Transverse colon (tissue), 4 donors: ENCODE measurements at regions of chr6 and their contacts with region 1.

Region 1: GRCh38 chr6:3742426-3743344 is 8.8 kb downstream of the PXDC1 start:
- DNase-seq: peak; percentile 91
- H3K4me3 ChIP-seq: peak overlapping the region in 1 of 4 donors; percentile 20
- H3K27ac ChIP-seq: peak overlapping the region; percentile 62 to 84 (median 74)
- H3K4me1 ChIP-seq: peaks cover 16 to 49% (median 37%) of the 10 kb centered on the region in 4 donors
- H3K27me3 ChIP-seq: no peaks in the 10 kb centered on the region
- CTCF ChIP-seq: peak; percentile 94 to 96 (median 95)
- EP300 ChIP-seq: no peak
- POLR2A ChIP-seq: no peak

Region 2: GRCh38 chr6:3118353-3119039 is 624.2 kb before region 1 on chr6 and contains the start of gene BPHL:
- in situ Hi-C with region 1: loop called in 3 of 4 experiments (anchors 10 to 25 kb)
- intact Hi-C with region 1: no loop called
- DNase-seq: peak; percentile 99
- H3K4me3 ChIP-seq: peak within 1 kb of the TSS; percentile 71 to 83 (median 74)
- H3K27ac ChIP-seq: peak within 1 kb of the TSS; percentile 91 to 96 (median 92)
- H3K4me1 ChIP-seq: peaks cover 6 to 18% (median 10%) of the 10 kb centered on the region in 4 donors
- H3K27me3 ChIP-seq: no peaks in the 10 kb centered on the region
- CTCF ChIP-seq: no peak
- EP300 ChIP-seq: no peak
- POLR2A ChIP-seq: peak; percentile 83
- total RNA-seq, gene BPHL: 16.1 to 32.5 (median 21.2) TPM

Region 3: DNA sequence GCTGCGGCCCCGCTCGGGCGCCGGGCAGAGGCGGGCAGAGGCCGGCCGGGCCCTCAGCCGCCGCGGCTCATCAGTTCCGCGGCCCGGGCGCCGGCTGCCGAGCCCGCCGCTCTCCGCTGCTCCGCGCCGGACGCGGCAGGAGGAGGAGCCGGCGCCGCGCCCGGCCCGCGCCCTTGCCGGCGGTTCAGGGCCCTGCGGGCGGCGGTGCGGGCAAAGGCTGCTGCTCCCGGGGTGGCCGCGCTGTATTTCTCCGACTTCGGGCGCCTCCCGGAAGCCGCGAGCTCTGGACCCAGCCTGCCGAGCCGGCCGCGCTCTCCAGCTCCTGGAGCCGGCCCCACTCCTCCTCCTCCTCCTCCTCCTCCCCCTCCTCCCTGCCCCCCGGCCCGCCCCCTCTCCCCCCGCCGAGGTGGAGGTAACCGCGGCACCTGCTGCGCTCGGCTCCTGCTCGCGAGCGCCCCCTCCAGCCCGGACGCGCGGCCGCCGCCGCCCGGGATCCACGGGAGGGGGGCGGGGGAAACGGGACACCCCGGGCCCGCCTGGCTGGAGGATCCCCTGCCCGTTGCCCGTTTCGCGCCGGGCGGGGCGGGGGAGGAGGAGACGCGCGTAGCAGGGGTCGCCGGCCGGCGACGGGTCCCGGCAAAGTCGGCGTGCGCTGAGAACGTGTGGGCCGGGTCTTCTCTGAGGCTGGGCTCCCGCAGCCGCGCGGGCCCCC is 285.8 kb before region 1 on chr6 and contains the start of gene SLC22A23:
- in situ Hi-C with region 1: loop called in 1 of 4 experiments (anchors 25 kb)
- intact Hi-C with region 1: no loop called
- DNase-seq: peak; percentile 85
- H3K4me3 ChIP-seq: peak within 1 kb of the TSS; percentile 51 to 83 (median 73)
- H3K27ac ChIP-seq: peak within 1 kb of the TSS; percentile 81 to 88 (median 88)
- H3K4me1 ChIP-seq: peaks cover 0 to 28% (median 15%) of the 10 kb centered on the region in 4 donors
- H3K27me3 ChIP-seq: peaks cover 5% of the 10 kb centered on the region
- CTCF ChIP-seq: peak; percentile 20 to 90 (median 71)
- EP300 ChIP-seq: no peak
- POLR2A ChIP-seq: peak; percentile 11
- total RNA-seq, gene SLC22A23: 96.1 to 161 (median 117) TPM

Region 4: GRCh38 chr6:3707024-3707423 is 35.7 kb before region 1 on chr6:
- in situ Hi-C with region 1: no loop called
- intact Hi-C with region 1: no loop called
- DNase-seq: no peak
- H3K4me3 ChIP-seq: no peak overlapping the region
- H3K27ac ChIP-seq: no peak overlapping the region
- H3K4me1 ChIP-seq: no peaks in the 10 kb centered on the region
- H3K27me3 ChIP-seq: no peaks in the 10 kb centered on the region
- CTCF ChIP-seq: no peak
- EP300 ChIP-seq: no peak
- POLR2A ChIP-seq: no peak

Region 5: GRCh38 chr6:3797231-3798054 is 54.8 kb after region 1 on chr6:
- in situ Hi-C with region 1: no loop called
- intact Hi-C with region 1: no loop called
- DNase-seq: no peak
- H3K4me3 ChIP-seq: no peak overlapping the region
- H3K27ac ChIP-seq: no peak overlapping the region
- H3K4me1 ChIP-seq: no peaks in the 10 kb centered on the region
- H3K27me3 ChIP-seq: no peaks in the 10 kb centered on the region
- CTCF ChIP-seq: no peak
- EP300 ChIP-seq: no peak
- POLR2A ChIP-seq: no peak

Region 6: DNA sequence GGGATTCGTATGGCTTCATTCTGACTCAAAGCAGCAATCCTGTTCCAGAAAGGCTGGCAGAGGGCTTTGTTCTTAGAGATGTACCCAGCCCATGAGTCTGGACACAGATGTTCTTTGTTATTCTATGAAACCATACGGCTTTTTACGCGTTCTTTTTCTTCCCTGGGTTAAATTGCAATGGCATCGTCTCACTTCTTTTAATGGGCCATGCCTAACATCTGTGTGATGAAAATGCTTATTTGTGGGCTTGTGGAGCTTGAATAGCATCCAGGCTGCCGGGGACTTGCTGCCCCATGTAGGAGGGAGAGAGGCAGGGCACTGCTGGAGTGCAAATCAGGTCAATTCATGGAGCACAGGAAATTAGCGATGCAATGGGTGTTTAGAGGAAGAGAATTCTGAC is 125.9 kb after region 1 on chr6:
- in situ Hi-C with region 1: no loop called
- intact Hi-C with region 1: no loop called
- DNase-seq: no peak
- H3K4me3 ChIP-seq: no peak overlapping the region
- H3K27ac ChIP-seq: no peak overlapping the region
- H3K4me1 ChIP-seq: peaks cover 0 to 14% (median 8%) of the 10 kb centered on the region in 4 donors
- H3K27me3 ChIP-seq: no peaks in the 10 kb centered on the region
- CTCF ChIP-seq: no peak
- EP300 ChIP-seq: no peak
- POLR2A ChIP-seq: no peak

Region 7: DNA sequence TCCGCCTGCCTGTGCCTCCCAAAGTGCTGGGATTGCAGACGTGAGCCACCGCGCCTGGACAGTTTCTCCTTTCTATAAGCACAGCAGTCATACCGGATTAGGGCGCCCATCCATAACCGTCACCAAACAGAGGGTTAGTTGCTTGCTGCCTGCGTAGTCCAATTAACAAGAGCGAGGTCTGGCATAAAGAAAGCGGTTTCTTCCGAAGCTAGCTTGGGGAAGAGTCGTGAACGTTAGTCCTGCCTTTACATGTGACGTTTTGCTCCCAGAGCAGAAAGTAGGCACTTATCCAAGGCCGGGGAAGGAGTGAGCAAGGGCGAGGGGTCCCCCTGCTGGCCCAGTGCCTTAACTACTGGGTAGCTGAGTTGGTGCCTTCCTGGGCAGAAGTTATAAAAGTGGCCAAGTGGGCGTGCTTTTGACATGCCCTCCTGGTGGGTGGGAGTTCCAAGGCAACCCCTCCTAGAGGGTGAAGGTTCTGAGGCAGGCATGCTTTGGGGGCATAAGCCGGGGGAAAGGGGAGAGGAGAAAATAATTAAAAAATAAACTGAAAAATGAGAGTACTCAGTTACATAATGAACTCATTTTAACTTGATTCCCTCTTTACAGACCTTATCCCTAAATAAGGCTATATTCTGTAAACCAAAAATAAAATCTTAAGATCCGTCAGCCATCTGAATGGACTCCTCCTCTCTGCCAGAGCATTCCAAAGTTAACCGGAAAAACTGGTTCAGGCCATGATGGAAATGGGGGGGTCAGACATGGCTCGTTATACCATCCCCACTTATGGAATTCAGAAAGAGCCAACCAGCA is 248.2 kb after region 1 on chr6:
- in situ Hi-C with region 1: loop called (anchors 5 to 10 kb)
- intact Hi-C with region 1: no loop called
- DNase-seq: peak; percentile 87
- H3K4me3 ChIP-seq: peak overlapping the region in 3 of 4 donors; percentile 20 to 46 (median 25)
- H3K27ac ChIP-seq: peak overlapping the region; percentile 48 to 69 (median 60)
- H3K4me1 ChIP-seq: peaks cover 5 to 20% (median 12%) of the 10 kb centered on the region in 4 donors
- H3K27me3 ChIP-seq: no peaks in the 10 kb centered on the region
- CTCF ChIP-seq: peak; percentile 79 to 87 (median 85)
- EP300 ChIP-seq: no peak
- POLR2A ChIP-seq: no peak

Region 8: GRCh38 chr6:4155848-4156466 is 413.3 kb after region 1 on chr6:
- in situ Hi-C with region 1: loop called in 3 of 4 experiments (anchors 25 kb)
- intact Hi-C with region 1: no loop called
- DNase-seq: peak; percentile 78
- H3K4me3 ChIP-seq: no peak overlapping the region
- H3K27ac ChIP-seq: no peak overlapping the region
- H3K4me1 ChIP-seq: peaks cover 0 to 3% (median 1%) of the 10 kb centered on the region in 4 donors
- H3K27me3 ChIP-seq: no peaks in the 10 kb centered on the region
- CTCF ChIP-seq: peak; percentile 85 to 88 (median 86)
- EP300 ChIP-seq: no peak
- POLR2A ChIP-seq: no peak